Heart left ventricle (tissue), 16 donors: ENCODE measurements at regions of chr1 and their contacts with region 1.

Region 1: GRCh38 chr1:55284852-55285251 is 69.7 kb upstream of the USP24 start:
- DNase-seq: peak in 2 of 5 donors; percentile 36 to 41
- ATAC-seq: peak in 3 of 4 donors; percentile 43 to 73 (median 67)
- H3K4me3 ChIP-seq: no peak overlapping the region
- H3K27ac ChIP-seq: no peak overlapping the region
- H3K4me1 ChIP-seq: no peaks in the 10 kb centered on the region
- H3K27me3 ChIP-seq: no peaks in the 10 kb centered on the region
- CTCF ChIP-seq: peak; percentile 42 to 77 (median 72)
- POLR2A ChIP-seq: no peak

Region 2: DNA sequence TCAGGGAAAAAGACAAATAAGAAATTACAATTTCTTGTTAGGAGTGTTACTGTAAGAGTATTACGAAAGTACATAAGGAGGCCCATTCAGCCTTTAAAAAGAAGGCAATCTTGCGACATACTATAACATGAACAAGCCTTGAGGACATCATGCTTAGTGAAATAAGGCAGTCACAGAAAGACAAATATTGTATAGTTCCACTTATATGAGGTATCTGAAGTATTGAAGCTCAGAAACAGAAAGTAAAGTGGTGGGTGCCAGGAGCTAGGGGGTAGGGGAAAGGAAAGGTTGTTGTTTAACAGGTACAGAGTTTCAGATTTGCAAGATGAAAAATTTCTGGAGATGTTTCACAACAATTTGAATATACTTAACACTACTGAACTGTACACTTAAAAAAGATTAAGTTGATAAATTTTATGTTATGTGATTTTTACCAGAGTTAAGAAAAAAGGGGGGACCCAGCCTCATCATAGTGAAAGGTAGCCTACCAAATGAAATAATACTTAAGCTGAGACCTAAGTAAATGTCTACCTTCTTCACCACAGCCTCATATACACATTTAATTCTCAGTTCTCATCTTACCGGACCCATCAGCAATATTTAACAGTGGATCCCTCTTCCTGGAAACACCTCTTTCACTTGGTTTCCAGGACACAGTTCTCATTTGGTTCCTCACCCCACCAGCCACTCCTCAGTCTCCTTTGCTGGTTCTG is 89.2 kb before region 1 on chr1:
- intact Hi-C with region 1: no loop called
- DNase-seq: no peak
- ATAC-seq: peak in 1 of 4 donors; percentile 16
- H3K4me3 ChIP-seq: no peak overlapping the region
- H3K27ac ChIP-seq: peak overlapping the region in 3 of 12 donors; percentile 12 to 68 (median 48)
- H3K4me1 ChIP-seq: peaks cover 2 to 56% (median 45%) of the 10 kb centered on the region in 12 donors
- H3K27me3 ChIP-seq: no peaks in the 10 kb centered on the region
- CTCF ChIP-seq: no peak
- POLR2A ChIP-seq: no peak

Region 3: GRCh38 chr1:55337801-55338447 is 53.1 kb after region 1 on chr1:
- intact Hi-C with region 1: loop called in 8 of 10 experiments (anchors 2 to 5 kb)
- DNase-seq: no peak
- ATAC-seq: peak in 2 of 4 donors; percentile 44 to 53
- H3K4me3 ChIP-seq: no peak overlapping the region
- H3K27ac ChIP-seq: no peak overlapping the region
- H3K4me1 ChIP-seq: peaks cover 0 to 6% (median 0%) of the 10 kb centered on the region in 12 donors
- H3K27me3 ChIP-seq: no peaks in the 10 kb centered on the region
- CTCF ChIP-seq: peak in 10 of 12 donors; percentile 31 to 62 (median 46)
- POLR2A ChIP-seq: no peak

Region 4: GRCh38 chr1:56376188-56376984 is 1091.5 kb after region 1 on chr1:
- intact Hi-C with region 1: loop called in 1 of 10 experiments (anchors 10 kb)
- DNase-seq: peak; percentile 37 to 66 (median 60)
- ATAC-seq: peak in 3 of 4 donors; percentile 39 to 64 (median 49)
- H3K4me3 ChIP-seq: no peak overlapping the region
- H3K27ac ChIP-seq: peak overlapping the region; percentile 18 to 78 (median 66)
- H3K4me1 ChIP-seq: peaks cover 0 to 63% (median 47%) of the 10 kb centered on the region in 12 donors
- H3K27me3 ChIP-seq: no peaks in the 10 kb centered on the region
- CTCF ChIP-seq: no peak
- POLR2A ChIP-seq: no peak

Region 5: GRCh38 chr1:56709269-56709880 is 1424.5 kb after region 1 on chr1:
- intact Hi-C with region 1: loop called (anchors 2 to 10 kb)
- DNase-seq: no peak
- ATAC-seq: peak in 3 of 4 donors; percentile 53 to 77 (median 58)
- H3K4me3 ChIP-seq: no peak overlapping the region
- H3K27ac ChIP-seq: no peak overlapping the region
- H3K4me1 ChIP-seq: peaks cover 0 to 18% (median 0%) of the 10 kb centered on the region in 12 donors
- H3K27me3 ChIP-seq: no peaks in the 10 kb centered on the region
- CTCF ChIP-seq: peak; percentile 40 to 72 (median 62)
- POLR2A ChIP-seq: no peak

Region 6: GRCh38 chr1:56821140-56821797 is 1536.4 kb after region 1 on chr1:
- intact Hi-C with region 1: loop called in 5 of 10 experiments (anchors 10 kb)
- DNase-seq: peak; percentile 73 to 86 (median 76)
- ATAC-seq: peak; percentile 38 to 78 (median 67)
- H3K4me3 ChIP-seq: no peak overlapping the region
- H3K27ac ChIP-seq: no peak overlapping the region
- H3K4me1 ChIP-seq: peaks cover 0 to 32% (median 8%) of the 10 kb centered on the region in 12 donors
- H3K27me3 ChIP-seq: peaks cover 0 to 3% (median 0%) of the 10 kb centered on the region in 9 donors
- CTCF ChIP-seq: peak; percentile 86 to 97 (median 92)
- POLR2A ChIP-seq: no peak